Endothelial cell of umbilical vein (primary cell): ENCODE measurements at regions of chr15 and their contacts with region 1.

Region 1: GRCh38 chr15:74382004-74382816 is 14.8 kb upstream of the CYP11A1 start:
- DNase-seq: peak; percentile 69
- H3K4me3 ChIP-seq: no peak overlapping the region
- H3K27ac ChIP-seq: no peak overlapping the region
- H3K4me1 ChIP-seq: peaks cover 28% of the 10 kb centered on the region
- H3K27me3 ChIP-seq: no peaks in the 10 kb centered on the region
- CTCF ChIP-seq: peak; percentile 97 to 99
- POLR2A ChIP-seq: no peak

Region 2: DNA sequence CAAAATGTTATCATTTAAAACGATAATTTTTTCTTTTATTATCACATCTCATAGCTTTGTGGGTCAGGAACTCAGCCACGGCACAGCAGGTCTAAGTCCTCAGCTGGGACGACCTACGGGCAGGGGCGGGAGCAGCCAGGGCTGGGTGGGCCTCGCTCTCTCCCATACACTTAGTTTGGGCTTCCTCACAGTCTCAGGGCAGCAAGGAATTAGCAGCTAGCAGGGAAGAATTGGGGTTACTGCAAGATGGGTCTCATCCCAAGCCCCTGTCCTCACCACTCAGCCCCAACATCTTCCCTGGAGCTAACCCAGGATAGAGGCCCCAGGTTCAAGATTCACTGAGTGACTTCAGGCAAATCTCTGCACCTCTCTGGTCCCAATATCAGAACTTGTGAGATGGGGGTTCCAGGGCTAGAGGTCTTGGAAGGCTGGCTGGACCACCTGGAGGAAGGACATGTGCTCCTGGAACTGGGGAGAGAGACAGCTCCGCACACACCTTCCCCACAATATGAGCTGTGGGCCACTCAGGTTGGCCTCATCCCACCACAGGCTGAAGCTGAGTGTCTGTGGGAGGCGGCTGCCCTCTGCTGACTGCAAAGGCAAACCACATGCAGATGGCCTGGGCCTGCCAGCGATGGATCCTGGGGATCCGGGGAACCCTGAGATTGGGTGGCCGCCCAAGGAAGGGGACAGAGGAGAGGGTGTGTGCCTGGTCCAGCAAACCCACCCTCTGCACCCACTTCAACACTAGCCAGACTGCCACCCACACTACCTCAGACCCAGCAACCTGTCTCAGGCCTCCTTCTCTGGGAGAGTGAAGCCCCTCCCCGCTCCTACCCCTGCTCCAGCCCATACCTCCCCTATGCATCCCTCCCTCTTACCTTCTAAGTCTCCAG is 59.8 kb before region 1 on chr15:
- CTCF ChIA-PET with region 1: no interaction called
- POLR2A ChIA-PET with region 1: no interaction called
- dilution Hi-C with region 1: no loop called
- intact Hi-C with region 1: no loop called
- DNase-seq: peak; percentile 49
- H3K4me3 ChIP-seq: no peak overlapping the region
- H3K27ac ChIP-seq: no peak overlapping the region
- H3K4me1 ChIP-seq: no peaks in the 10 kb centered on the region
- H3K27me3 ChIP-seq: peaks cover 0 to 1% of the 10 kb centered on the region in 2 experiments
- CTCF ChIP-seq: peak; percentile 74 to 93
- POLR2A ChIP-seq: no peak

Region 3: DNA sequence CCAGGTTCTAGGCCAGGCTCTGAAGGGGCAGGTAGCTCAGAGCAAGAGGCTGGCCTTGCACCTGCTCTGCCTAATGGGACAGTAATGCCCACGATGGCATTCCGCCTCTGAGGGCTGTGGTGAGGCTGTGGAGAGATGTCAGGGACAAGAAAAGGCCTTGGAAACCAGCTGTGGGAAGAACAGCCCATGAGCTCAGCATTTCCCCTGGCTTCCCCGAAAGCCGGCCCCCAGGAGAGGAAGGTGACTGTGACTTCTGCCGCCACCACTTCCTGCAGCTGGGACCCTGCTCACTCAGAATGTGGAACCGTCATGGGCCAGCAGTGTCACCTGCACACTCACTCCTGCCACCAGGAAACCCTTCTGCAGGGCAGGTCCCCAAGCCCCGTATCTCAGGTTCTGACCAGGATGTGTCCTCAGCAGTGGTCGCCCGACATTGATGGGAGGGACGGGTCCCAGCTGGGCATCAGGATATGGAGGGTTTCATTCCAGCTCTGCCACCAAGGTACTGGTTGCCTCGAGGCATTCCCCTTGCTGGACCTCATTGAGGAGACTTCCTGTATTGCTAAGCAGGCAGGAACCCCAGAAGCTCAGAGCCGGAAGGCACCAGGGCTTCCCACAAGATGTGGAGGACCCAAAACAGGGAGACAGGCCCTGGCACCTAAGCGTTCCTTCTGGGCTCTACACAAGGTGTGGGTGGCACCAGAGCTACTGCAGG is 20.8 kb after region 1 on chr15:
- CTCF ChIA-PET with region 1: interaction called, 7 read pairs
- POLR2A ChIA-PET with region 1: interaction called, 3 read pairs
- dilution Hi-C with region 1: no loop called
- intact Hi-C with region 1: loop called (anchors 2 kb)
- DNase-seq: no peak
- H3K4me3 ChIP-seq: no peak overlapping the region
- H3K27ac ChIP-seq: no peak overlapping the region
- H3K4me1 ChIP-seq: peaks cover 6% of the 10 kb centered on the region
- H3K27me3 ChIP-seq: peaks cover 0 to 17% of the 10 kb centered on the region in 2 experiments
- CTCF ChIP-seq: no peak
- POLR2A ChIP-seq: no peak

Region 4: GRCh38 chr15:74438721-74439316 is 56.6 kb after region 1 on chr15:
- CTCF ChIA-PET with region 1: interaction called, 313 read pairs
- POLR2A ChIA-PET with region 1: interaction called, 4 read pairs
- dilution Hi-C with region 1: no loop called
- intact Hi-C with region 1: loop called (anchors 1 kb)
- DNase-seq: peak; percentile 65
- H3K4me3 ChIP-seq: no peak overlapping the region
- H3K27ac ChIP-seq: no peak overlapping the region
- H3K4me1 ChIP-seq: no peaks in the 10 kb centered on the region
- H3K27me3 ChIP-seq: no peaks in the 10 kb centered on the region
- CTCF ChIP-seq: peak; percentile 90 to 95
- POLR2A ChIP-seq: no peak

Region 5: DNA sequence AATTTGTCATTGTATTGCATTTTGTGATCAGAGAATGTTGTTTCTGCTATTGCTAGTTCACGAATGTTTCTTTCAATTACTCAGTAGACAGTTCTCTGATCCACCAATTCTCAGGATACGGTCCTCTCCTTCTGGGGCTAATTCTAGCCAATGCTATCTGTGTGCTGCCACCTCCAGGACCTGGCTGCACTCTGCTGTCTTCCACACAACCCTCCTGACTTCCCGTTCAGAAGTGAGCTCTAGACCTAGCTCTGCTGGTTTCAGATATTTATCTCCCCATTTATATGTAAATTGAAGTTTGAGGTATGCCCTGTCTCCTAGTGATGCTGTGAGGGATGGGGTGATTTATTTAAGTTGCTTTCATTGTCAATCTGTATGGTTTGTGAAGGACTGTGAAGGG is 100.5 kb after region 1 on chr15:
- CTCF ChIA-PET with region 1: interaction called, 10 read pairs
- POLR2A ChIA-PET with region 1: interaction called, 5 read pairs
- dilution Hi-C with region 1: no loop called
- intact Hi-C with region 1: no loop called
- DNase-seq: no peak
- H3K4me3 ChIP-seq: no peak overlapping the region
- H3K27ac ChIP-seq: no peak overlapping the region
- H3K4me1 ChIP-seq: no peaks in the 10 kb centered on the region
- H3K27me3 ChIP-seq: no peaks in the 10 kb centered on the region
- CTCF ChIP-seq: peak in 1 of 2 donors; percentile 3
- POLR2A ChIP-seq: no peak

Region 6: GRCh38 chr15:74545880-74546656 is 163.9 kb after region 1 on chr15:
- CTCF ChIA-PET with region 1: interaction called, 8 read pairs
- POLR2A ChIA-PET with region 1: no interaction called
- dilution Hi-C with region 1: no loop called
- intact Hi-C with region 1: loop called (anchors 1 kb)
- DNase-seq: peak; percentile 99
- H3K4me3 ChIP-seq: no peak overlapping the region
- H3K27ac ChIP-seq: no peak overlapping the region
- H3K4me1 ChIP-seq: peaks cover 19% of the 10 kb centered on the region
- H3K27me3 ChIP-seq: no peaks in the 10 kb centered on the region
- CTCF ChIP-seq: no peak
- POLR2A ChIP-seq: peak; percentile 39

Region 7: GRCh38 chr15:74635228-74635627 is 253.0 kb after region 1 on chr15:
- CTCF ChIA-PET with region 1: interaction called, 34 read pairs
- POLR2A ChIA-PET with region 1: no interaction called
- dilution Hi-C with region 1: no loop called
- intact Hi-C with region 1: no loop called
- DNase-seq: peak; percentile 76
- H3K4me3 ChIP-seq: no peak overlapping the region
- H3K27ac ChIP-seq: no peak overlapping the region
- H3K4me1 ChIP-seq: no peaks in the 10 kb centered on the region
- H3K27me3 ChIP-seq: no peaks in the 10 kb centered on the region
- CTCF ChIP-seq: peak; percentile 82 to 89
- POLR2A ChIP-seq: no peak